CD8-positive, alpha-beta memory T cell (primary cell): ENCODE measurements at regions of chr7 and their contacts with region 1.

Region 1: DNA sequence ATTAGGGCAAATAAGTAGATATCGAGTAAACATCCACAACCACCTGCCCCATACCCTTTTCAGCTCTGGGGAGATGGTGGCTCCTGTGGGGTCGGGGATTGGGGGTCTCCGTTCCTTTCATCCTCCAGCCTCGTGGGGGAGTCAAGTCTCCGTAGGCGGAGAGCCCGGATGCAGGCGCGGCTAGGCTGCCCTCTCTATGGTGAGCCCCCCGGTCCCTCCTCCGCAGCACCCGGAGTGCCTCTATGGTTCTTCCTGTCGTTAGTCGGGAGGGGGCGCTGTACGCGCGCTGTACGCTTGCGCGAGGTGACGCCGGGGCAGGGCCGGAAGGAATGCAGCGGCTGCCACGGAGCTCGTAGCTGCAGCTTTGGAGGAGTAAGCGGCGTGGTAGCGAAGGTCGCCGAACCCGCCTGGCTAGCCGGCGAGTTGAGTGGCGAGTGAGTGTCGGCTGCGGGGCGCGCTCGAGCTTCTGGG is 14.8 kb upstream of the MMD2 start:
- DNase-seq: peak; percentile 87 to 95 (median 93)
- H3K4me3 ChIP-seq: peak overlapping the region; percentile 53
- H3K4me3 Mint-ChIP-seq: peak overlapping the region; percentile 89 to 100 (median 96)
- H3K27ac ChIP-seq: peak overlapping the region; percentile 65
- H3K27ac Mint-ChIP-seq: peak overlapping the region; percentile 81 to 99 (median 96)
- H3K4me1 ChIP-seq: no peaks in the 10 kb centered on the region
- H3K4me1 Mint-ChIP-seq: peaks cover 29 to 39% (median 32%) of the 10 kb centered on the region in 3 donors
- H3K27me3 ChIP-seq: no peaks in the 10 kb centered on the region
- H3K27me3 Mint-ChIP-seq: no peaks in the 10 kb centered on the region

Region 2: GRCh38 chr7:4996696-4997222 is 23.0 kb after region 1 on chr7:
- CTCF ChIA-PET with region 1: interaction called, 12 read pairs
- POLR2A ChIA-PET with region 1: no interaction called
- DNase-seq: no peak
- H3K4me3 ChIP-seq: no peak overlapping the region
- H3K4me3 Mint-ChIP-seq: no peak overlapping the region
- H3K27ac ChIP-seq: no peak overlapping the region
- H3K27ac Mint-ChIP-seq: no peak overlapping the region
- H3K4me1 ChIP-seq: no peaks in the 10 kb centered on the region
- H3K4me1 Mint-ChIP-seq: peaks cover 4 to 10% (median 8%) of the 10 kb centered on the region in 3 donors
- H3K27me3 ChIP-seq: no peaks in the 10 kb centered on the region
- H3K27me3 Mint-ChIP-seq: no peaks in the 10 kb centered on the region

Region 3: GRCh38 chr7:5035276-5035675 is 61.5 kb after region 1 on chr7:
- CTCF ChIA-PET with region 1: interaction called, 10 read pairs
- POLR2A ChIA-PET with region 1: no interaction called
- DNase-seq: no peak
- H3K4me3 ChIP-seq: no peak overlapping the region
- H3K4me3 Mint-ChIP-seq: peak overlapping the region in 1 of 7 donors; percentile 44
- H3K27ac ChIP-seq: no peak overlapping the region
- H3K27ac Mint-ChIP-seq: no peak overlapping the region
- H3K4me1 ChIP-seq: no peaks in the 10 kb centered on the region
- H3K4me1 Mint-ChIP-seq: no peaks in the 10 kb centered on the region
- H3K27me3 ChIP-seq: no peaks in the 10 kb centered on the region
- H3K27me3 Mint-ChIP-seq: peaks cover 0 to 3% of the 10 kb centered on the region in 2 donors

Region 4: DNA sequence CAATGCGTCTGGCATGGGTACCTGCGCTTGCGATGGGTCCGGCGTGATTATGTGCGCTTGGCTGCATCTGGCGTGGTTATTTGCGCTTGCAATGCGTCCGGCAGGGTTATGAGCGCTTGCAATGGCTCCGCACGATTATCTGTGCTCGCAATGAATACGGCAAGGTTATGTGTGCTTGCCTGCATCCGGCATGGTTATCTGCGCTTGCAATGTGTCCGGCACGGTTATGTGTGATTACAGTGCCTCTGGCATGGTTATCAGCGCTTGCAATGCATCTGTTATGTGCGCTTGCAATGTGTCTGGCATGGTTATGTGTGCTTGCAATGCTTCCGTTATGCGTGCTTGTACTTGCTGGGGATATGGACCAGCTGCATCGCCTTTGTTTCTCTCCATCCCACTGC is 109.5 kb after region 1 on chr7:
- CTCF ChIA-PET with region 1: interaction called, 51 read pairs
- POLR2A ChIA-PET with region 1: no interaction called
- DNase-seq: no peak
- H3K4me3 ChIP-seq: no peak overlapping the region
- H3K4me3 Mint-ChIP-seq: peak overlapping the region in 1 of 7 donors; percentile 59
- H3K27ac ChIP-seq: no peak overlapping the region
- H3K27ac Mint-ChIP-seq: no peak overlapping the region
- H3K4me1 ChIP-seq: no peaks in the 10 kb centered on the region
- H3K4me1 Mint-ChIP-seq: peaks cover 0 to 4% (median 2%) of the 10 kb centered on the region in 3 donors
- H3K27me3 ChIP-seq: no peaks in the 10 kb centered on the region
- H3K27me3 Mint-ChIP-seq: peaks cover 0 to 11% of the 10 kb centered on the region in 2 donors

Region 5: GRCh38 chr7:5172196-5172775 is 198.5 kb after region 1 on chr7:
- CTCF ChIA-PET with region 1: interaction called, 15 read pairs
- POLR2A ChIA-PET with region 1: no interaction called
- DNase-seq: no peak
- H3K4me3 ChIP-seq: no peak overlapping the region
- H3K4me3 Mint-ChIP-seq: no peak overlapping the region
- H3K27ac ChIP-seq: no peak overlapping the region
- H3K27ac Mint-ChIP-seq: no peak overlapping the region
- H3K4me1 ChIP-seq: peaks cover 7% of the 10 kb centered on the region
- H3K4me1 Mint-ChIP-seq: peaks cover 3 to 14% (median 6%) of the 10 kb centered on the region in 3 donors
- H3K27me3 ChIP-seq: no peaks in the 10 kb centered on the region
- H3K27me3 Mint-ChIP-seq: peaks cover 5 to 7% of the 10 kb centered on the region in 2 donors

Region 6: DNA sequence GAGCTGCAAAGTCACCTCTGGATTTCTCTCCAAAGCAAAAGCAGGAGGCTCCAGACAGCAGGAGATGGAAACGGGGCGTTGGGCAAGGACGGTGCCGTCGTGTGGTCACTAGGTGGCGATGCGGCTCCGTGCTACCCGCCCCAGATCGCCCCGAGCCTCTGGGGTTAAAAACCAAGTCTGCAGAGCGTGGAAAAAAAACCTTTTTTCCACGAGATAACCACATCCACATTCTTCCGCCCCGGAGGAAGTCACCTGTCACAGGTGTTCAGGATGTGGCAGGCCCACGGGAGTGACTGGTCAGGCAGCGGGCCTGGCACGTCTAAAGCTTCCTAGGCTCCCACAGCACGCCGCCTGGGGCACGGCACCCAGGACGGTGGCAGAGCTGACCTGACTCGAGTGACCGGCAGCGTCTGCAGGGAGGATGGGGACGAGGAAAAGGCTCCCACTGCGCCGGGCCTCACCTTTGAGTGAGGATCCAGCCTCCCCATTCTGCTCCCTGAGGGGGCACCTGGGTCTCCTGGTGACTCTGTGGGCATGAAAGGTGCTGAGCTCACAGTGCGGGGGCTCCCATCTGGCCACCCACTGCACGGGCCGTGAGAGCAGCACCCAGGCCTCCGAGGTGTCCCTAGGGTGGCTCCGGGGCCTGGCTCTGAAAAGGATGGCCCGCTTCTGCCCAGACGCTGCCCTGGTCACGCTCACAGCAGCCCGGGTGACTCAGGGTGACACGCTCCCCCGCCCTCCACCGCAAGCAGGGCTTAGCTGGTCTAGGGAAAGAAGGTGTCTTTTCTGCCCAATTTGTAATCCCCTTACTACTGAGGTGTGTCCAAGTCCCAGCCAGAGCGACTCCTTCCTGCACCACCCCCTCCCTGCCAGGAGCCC is 521.2 kb after region 1 on chr7:
- CTCF ChIA-PET with region 1: no interaction called
- POLR2A ChIA-PET with region 1: no interaction called
- DNase-seq: peak; percentile 67 to 83 (median 73)
- H3K4me3 ChIP-seq: peak overlapping the region; percentile 25
- H3K4me3 Mint-ChIP-seq: peak overlapping the region in 6 of 7 donors; percentile 3 to 73 (median 58)
- H3K27ac ChIP-seq: no peak overlapping the region
- H3K27ac Mint-ChIP-seq: peak overlapping the region in 5 of 8 donors; percentile 23 to 51 (median 24)
- H3K4me1 ChIP-seq: peaks cover 19% of the 10 kb centered on the region
- H3K4me1 Mint-ChIP-seq: peaks cover 8 to 24% (median 23%) of the 10 kb centered on the region in 3 donors
- H3K27me3 ChIP-seq: no peaks in the 10 kb centered on the region
- H3K27me3 Mint-ChIP-seq: no peaks in the 10 kb centered on the region